ENCODE measurements at regions of chr5 and their contacts with region 1.

Region 1: DNA sequence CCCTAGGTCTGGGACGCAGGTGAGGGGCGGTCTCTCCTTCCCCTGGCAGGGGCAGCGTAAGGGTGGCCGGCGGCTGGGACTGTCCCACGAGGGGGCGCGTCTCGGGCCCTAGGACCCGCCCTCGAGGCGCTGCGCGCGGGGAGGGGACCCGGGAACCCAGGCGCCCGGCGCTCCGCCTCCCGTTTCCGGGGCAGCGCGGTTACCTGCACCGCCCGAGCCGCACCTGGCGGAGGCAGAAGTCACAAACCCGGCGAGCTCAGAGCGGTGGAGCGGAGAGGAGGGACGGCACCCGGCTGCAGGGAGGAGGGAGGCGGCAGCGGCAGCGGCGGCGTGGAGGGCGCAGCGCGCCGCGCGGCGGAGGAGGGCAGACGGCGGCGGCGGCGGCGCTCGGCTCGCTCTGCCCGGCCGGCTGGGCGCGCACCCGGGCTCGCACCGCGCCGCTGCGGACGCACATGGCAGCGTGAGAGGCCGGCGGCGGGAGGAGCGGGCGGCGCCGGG is at the start of gene WWC1:
- DNase-seq: peak; percentile 82 to 99
- H3K4me3 ChIP-seq: peak within 1 kb of the TSS; percentile 63
- H3K27ac ChIP-seq: peak within 1 kb of the TSS; percentile 91
- H3K4me1 ChIP-seq: peaks cover 76% of the 10 kb centered on the region
- H3K27me3 ChIP-seq: no peaks in the 10 kb centered on the region
- CTCF ChIP-seq: peak; percentile 68
- total RNA-seq, gene WWC1: 79.5 and 97.7 TPM in 2 replicates

Region 2: DNA sequence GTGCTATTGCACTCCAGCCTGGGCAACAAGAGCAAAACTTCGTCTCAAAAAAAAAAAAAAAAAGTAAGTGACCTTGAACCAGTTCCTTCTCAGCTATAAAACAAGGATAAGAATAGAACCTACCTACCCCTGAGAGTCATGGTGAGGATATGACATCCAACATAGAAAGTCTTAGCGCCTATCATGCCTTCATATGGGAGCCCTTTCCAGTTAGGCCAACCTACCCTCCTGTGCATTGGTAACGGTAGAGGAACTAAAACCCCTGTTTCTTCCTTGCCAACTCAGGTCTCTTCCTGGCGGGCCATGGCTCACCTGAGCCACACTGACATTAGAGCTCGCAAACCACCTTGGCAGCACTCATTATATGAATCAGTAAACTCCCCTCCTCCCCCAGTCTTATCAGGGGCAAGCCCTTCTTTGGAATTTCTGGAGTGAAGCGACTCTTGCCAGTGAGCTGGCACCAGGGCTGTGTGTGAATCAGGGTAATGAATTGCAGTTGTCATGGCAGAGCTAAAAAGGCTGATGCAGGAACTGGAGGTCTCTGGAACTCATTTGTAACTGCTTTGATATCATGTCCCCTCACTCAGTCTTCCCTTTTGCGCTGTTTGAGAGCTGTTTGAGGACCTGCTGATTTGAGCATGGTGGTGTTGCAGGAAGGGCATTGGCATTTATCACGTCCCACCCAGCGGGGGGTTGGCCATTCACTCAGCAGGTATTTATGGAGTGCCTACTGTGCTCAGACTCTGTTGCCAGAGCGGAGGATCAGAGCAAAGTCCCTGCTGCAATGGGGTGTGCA is 10.3 kb after region 1 on chr5:
- CTCF ChIA-PET with region 1: interaction called, 6 read pairs
- POLR2A ChIA-PET with region 1: interaction called, 10 read pairs
- intact Hi-C with region 1: no loop called
- DNase-seq: peak; percentile 84 to 97
- H3K4me3 ChIP-seq: no peak overlapping the region
- H3K27ac ChIP-seq: peak overlapping the region; percentile 63
- H3K4me1 ChIP-seq: peaks cover 61% of the 10 kb centered on the region
- H3K27me3 ChIP-seq: no peaks in the 10 kb centered on the region
- CTCF ChIP-seq: no peak

Region 3: DNA sequence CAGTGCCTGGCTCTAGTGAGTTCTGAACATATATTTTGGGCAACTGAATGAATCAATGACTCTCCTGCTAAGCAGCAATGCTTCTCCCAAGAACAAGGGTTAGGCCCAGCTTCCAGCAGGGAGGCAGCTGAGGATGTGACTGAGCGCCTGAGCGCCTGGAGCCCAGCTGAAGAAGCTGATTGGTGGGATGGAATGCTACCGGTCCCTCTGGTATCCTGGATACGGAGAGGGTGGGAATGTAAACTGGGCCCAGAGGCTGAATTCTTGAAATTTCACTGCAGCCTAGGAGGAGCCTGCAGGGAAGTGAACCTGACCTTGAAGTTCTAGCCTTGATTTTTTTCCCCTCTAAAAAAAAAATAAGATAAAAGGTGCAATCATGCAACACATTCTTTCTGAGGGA is 43.2 kb after region 1 on chr5:
- CTCF ChIA-PET with region 1: no interaction called
- POLR2A ChIA-PET with region 1: interaction called, 5 read pairs
- intact Hi-C with region 1: loop called (anchors 1 kb)
- DNase-seq: peak; percentile 92 to 96
- H3K4me3 ChIP-seq: no peak overlapping the region
- H3K27ac ChIP-seq: peak overlapping the region; percentile 62
- H3K4me1 ChIP-seq: peaks cover 75% of the 10 kb centered on the region
- H3K27me3 ChIP-seq: no peaks in the 10 kb centered on the region
- CTCF ChIP-seq: no peak

Region 4: GRCh38 chr5:168359832-168360460 is 68.4 kb after region 1 on chr5:
- CTCF ChIA-PET with region 1: interaction called, 6 read pairs
- POLR2A ChIA-PET with region 1: interaction called, 4 read pairs
- intact Hi-C with region 1: loop called (anchors 1 kb)
- DNase-seq: peak; percentile 83 to 99
- H3K4me3 ChIP-seq: no peak overlapping the region
- H3K27ac ChIP-seq: peak overlapping the region; percentile 97
- H3K4me1 ChIP-seq: peaks cover 90% of the 10 kb centered on the region
- H3K27me3 ChIP-seq: no peaks in the 10 kb centered on the region
- CTCF ChIP-seq: no peak

Region 5: DNA sequence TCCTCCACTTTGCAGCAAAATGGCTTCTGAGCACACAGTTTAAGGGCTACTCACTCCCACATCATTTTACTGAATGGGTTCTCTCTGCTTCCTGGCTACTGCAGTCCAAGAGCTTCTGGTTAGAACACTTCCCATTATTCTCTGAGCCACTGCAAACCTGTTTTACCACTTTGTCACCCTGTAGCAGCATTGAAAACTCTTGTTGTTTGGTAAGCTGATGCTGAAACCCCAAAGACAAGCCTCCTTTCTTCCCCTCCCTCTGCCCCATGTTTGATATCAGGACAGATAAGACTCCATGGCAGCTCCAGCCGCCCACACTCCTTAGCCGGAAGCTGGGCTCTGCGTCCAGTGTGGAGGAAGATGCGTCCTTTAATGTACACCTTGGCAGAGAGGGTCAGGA is 110.4 kb after region 1 on chr5:
- CTCF ChIA-PET with region 1: interaction called, 17 read pairs
- POLR2A ChIA-PET with region 1: interaction called, 8 read pairs
- intact Hi-C with region 1: loop called (anchors 1 kb)
- DNase-seq: peak; percentile 79 to 97
- H3K4me3 ChIP-seq: no peak overlapping the region
- H3K27ac ChIP-seq: peak overlapping the region; percentile 90
- H3K4me1 ChIP-seq: peaks cover 44% of the 10 kb centered on the region
- H3K27me3 ChIP-seq: no peaks in the 10 kb centered on the region
- CTCF ChIP-seq: no peak

Region 6: DNA sequence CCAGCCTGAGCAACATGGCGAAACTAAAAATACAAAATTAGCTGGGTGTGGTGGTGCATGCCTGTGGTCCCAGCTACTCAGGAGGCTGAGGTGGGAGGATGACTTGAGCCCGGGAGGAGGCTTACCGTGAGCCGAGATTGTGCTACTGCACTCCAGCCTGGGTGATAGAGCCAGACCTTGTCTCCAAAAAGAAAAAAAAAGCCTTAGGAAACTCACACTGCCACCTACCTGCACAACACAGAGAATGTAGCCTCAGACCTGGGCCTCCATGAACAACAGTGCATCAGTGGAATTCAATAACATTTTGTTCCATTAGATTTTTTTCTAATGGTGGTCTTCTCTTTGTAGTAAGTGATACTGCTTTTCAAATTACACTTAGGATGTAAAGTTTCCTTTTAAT is 130.9 kb after region 1 on chr5:
- CTCF ChIA-PET with region 1: no interaction called
- POLR2A ChIA-PET with region 1: no interaction called
- intact Hi-C with region 1: no loop called
- DNase-seq: no peak
- H3K4me3 ChIP-seq: no peak overlapping the region
- H3K27ac ChIP-seq: no peak overlapping the region
- H3K4me1 ChIP-seq: no peaks in the 10 kb centered on the region
- H3K27me3 ChIP-seq: no peaks in the 10 kb centered on the region
- CTCF ChIP-seq: peak; percentile 62